ENCODE measurements at regions of chr2 and their contacts with region 1.

Region 1: GRCh38 chr2:85642725-85643124 is 25.3 kb downstream of the SFTPB start:
- DNase-seq: no peak
- H3K4me3 ChIP-seq: no peak overlapping the region
- H3K27ac ChIP-seq: no peak overlapping the region
- H3K4me1 ChIP-seq: no peaks in the 10 kb centered on the region
- H3K27me3 ChIP-seq: no peaks in the 10 kb centered on the region
- CTCF ChIP-seq: no peak
- EP300 ChIP-seq: no peak
- POLR2A ChIP-seq: no peak

Region 2: GRCh38 chr2:85707304-85707703 is 64.6 kb after region 1 on chr2:
- intact Hi-C with region 1: loop called in 2 of 4 experiments (anchors 5 kb)
- DNase-seq: peak in 2 of 5 donors; percentile 57 to 78
- H3K4me3 ChIP-seq: no peak overlapping the region
- H3K27ac ChIP-seq: no peak overlapping the region
- H3K4me1 ChIP-seq: peaks cover 20% of the 10 kb centered on the region
- H3K27me3 ChIP-seq: no peaks in the 10 kb centered on the region
- CTCF ChIP-seq: peak; percentile 75 to 83 (median 80)
- EP300 ChIP-seq: no peak
- POLR2A ChIP-seq: no peak